K562 (cell line): ENCODE measurements at regions of chr3 and their contacts with region 1.

Region 1: DNA sequence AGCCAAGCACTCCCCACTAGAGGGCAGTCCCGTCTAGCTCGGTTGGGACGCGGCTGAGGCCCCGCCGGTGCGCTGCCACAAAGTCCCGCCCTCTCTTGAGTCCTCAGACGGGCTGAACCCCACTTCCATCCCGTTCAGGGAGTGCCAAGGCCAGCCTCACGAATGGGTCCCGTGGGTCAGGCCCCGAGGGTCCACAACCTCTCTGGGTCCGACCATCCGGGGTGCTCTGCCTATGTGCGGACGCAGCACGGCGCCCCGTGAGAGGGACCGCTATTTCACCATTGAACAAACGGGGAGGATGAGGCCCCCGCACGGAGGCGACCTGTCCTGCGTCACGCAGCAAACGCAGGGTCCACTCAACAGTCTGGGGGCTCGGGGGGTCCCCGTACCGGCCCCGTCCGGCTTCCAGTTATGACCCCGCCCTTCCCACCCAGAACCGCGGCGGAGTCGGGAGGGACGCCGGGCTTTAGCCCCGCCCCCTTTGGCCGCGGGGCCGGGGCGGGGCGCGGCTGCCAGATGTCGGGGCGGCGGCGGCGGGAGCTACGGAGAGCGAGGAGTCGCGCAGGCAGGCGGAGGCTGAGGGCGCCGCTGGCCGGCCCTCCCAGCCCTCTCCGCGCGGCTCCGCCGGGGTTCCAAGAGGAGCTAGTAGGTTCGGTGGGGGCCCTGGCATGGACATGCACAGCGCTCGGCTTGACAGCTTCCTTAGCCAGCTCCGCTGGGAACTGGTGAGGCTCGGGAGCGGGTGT is at the start of gene INKA1:
- DNase-seq: peak; percentile 87 to 91 (median 88)
- ATAC-seq: peak; percentile 85
- H3K4me3 ChIP-seq: peak within 1 kb of the TSS; percentile 82
- H3K27ac ChIP-seq: peak within 1 kb of the TSS; percentile 81
- H3K4me1 ChIP-seq: peaks cover 43 to 62% of the 10 kb centered on the region in 2 experiments
- H3K27me3 ChIP-seq: no peaks in the 10 kb centered on the region
- CTCF ChIP-seq: peak; percentile 79 to 87 (median 84)
- EP300 ChIP-seq: no peak
- POLR2A ChIP-seq: no peak; the same call in none of the 2 replicates
- RAD21 ChIP-seq: peak; percentile 85 to 90
- polyA plus RNA-seq, gene INKA1: 0.55 to 1.2 TPM

Region 2: GRCh38 chr3:49428697-49429100 is 374.2 kb before region 1 on chr3:
- CTCF ChIA-PET with region 1: no interaction called
- POLR2A ChIA-PET with region 1: no interaction called
- in situ Hi-C with region 1: no loop called
- intact Hi-C with region 1: no loop called
- DNase-seq: no peak
- ATAC-seq: no peak
- H3K4me3 ChIP-seq: peak overlapping the region; percentile 58
- H3K27ac ChIP-seq: peak overlapping the region; percentile 88
- H3K4me1 ChIP-seq: peaks cover 0 to 21% of the 10 kb centered on the region in 2 experiments; a peak in 3 of 5 replicates
- H3K27me3 ChIP-seq: no peaks in the 10 kb centered on the region
- CTCF ChIP-seq: no peak
- EP300 ChIP-seq: no peak
- POLR2A ChIP-seq: no peak
- RAD21 ChIP-seq: no peak

Region 3: GRCh38 chr3:49786241-49786958 is 16.5 kb before region 1 on chr3 and contains the start of gene IP6K1:
- CTCF ChIA-PET with region 1: no interaction called
- POLR2A ChIA-PET with region 1: interaction called, 16 read pairs
- in situ Hi-C with region 1: no loop called
- intact Hi-C with region 1: no loop called
- DNase-seq: peak; percentile 97 to 99 (median 98)
- ATAC-seq: peak; percentile 98
- H3K4me3 ChIP-seq: peak within 1 kb of the TSS; percentile 84
- H3K27ac ChIP-seq: peak within 1 kb of the TSS; percentile 91
- H3K4me1 ChIP-seq: peaks cover 12 to 23% of the 10 kb centered on the region in 2 experiments; a peak in 4 of 5 replicates
- H3K27me3 ChIP-seq: no peaks in the 10 kb centered on the region
- CTCF ChIP-seq: no peak
- EP300 ChIP-seq: no peak
- POLR2A ChIP-seq: peak; percentile 87
- RAD21 ChIP-seq: no peak
- polyA plus RNA-seq, gene IP6K1: 0.46 to 1.9 TPM

Region 4: GRCh38 chr3:49813497-49814174 is 10.7 kb after region 1 on chr3 and contains the start of gene UBA7:
- CTCF ChIA-PET with region 1: no interaction called
- POLR2A ChIA-PET with region 1: interaction called, 10 read pairs
- in situ Hi-C with region 1: no loop called
- intact Hi-C with region 1: no loop called
- DNase-seq: peak in 2 of 4 experiments; percentile 17
- ATAC-seq: peak; percentile 77
- H3K4me3 ChIP-seq: no peak within 1 kb of the TSS
- H3K27ac ChIP-seq: no peak within 1 kb of the TSS
- H3K4me1 ChIP-seq: peaks cover 0 to 15% of the 10 kb centered on the region in 2 experiments; a peak in 3 of 5 replicates
- H3K27me3 ChIP-seq: no peaks in the 10 kb centered on the region
- CTCF ChIP-seq: no peak
- EP300 ChIP-seq: no peak
- POLR2A ChIP-seq: no peak
- RAD21 ChIP-seq: no peak
- polyA plus RNA-seq, gene UBA7: 0.17 to 0.80 TPM

Region 5: GRCh38 chr3:49839193-49839809 is 36.4 kb after region 1 on chr3:
- CTCF ChIA-PET with region 1: interaction called, 9 read pairs
- POLR2A ChIA-PET with region 1: interaction called, 4 read pairs
- in situ Hi-C with region 1: no loop called
- intact Hi-C with region 1: loop called (anchors 1 kb)
- DNase-seq: peak; percentile 49 to 78 (median 58)
- ATAC-seq: peak; percentile 94
- H3K4me3 ChIP-seq: no peak overlapping the region
- H3K27ac ChIP-seq: no peak overlapping the region
- H3K4me1 ChIP-seq: no peaks in the 10 kb centered on the region; a peak in 1 of 5 replicates
- H3K27me3 ChIP-seq: no peaks in the 10 kb centered on the region
- CTCF ChIP-seq: peak; percentile 77 to 90 (median 82)
- EP300 ChIP-seq: no peak
- POLR2A ChIP-seq: no peak
- RAD21 ChIP-seq: peak; percentile 86 to 88

Region 6: DNA sequence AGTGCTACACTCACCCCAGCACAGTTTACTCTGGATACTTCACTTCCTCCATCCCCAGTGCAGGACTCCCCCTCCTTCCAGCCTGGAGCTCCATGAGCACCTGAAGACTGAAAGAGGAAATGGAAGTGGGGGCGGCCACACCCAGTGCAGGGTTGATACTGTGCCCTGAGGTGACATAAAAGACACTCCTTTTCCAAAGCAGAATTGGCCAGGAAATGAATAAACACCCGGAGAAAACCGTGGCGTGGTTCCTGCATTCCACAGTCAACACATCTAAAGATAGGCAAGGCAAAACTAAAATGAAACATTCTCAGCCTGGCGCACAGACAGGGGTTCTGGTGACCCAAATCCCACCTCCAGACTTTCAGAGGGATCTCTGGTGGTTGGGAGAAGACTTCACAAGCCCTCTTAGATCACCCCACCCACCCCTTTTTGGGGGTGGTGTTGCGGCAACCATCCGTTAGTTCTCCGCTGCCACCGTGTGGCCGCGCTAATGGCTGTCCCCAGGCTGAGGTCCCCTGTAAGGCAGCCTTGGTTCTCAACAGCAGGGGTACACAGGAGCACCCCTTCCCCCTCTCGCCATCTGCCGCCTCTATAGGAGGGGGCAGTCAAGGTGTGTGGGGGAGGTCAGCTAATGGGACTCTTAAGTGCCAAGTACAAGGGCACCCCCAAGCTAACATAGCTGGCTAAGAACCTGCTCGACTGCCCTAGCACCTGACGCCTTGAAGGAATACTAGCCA is 103.3 kb after region 1 on chr3:
- CTCF ChIA-PET with region 1: no interaction called
- POLR2A ChIA-PET with region 1: interaction called, 4 read pairs
- in situ Hi-C with region 1: no loop called
- intact Hi-C with region 1: loop called (anchors 2 kb)
- DNase-seq: peak; percentile 76 to 86 (median 80)
- ATAC-seq: peak; percentile 75
- H3K4me3 ChIP-seq: peak overlapping the region; percentile 31
- H3K27ac ChIP-seq: peak overlapping the region; percentile 82
- H3K4me1 ChIP-seq: peaks cover 37 to 73% of the 10 kb centered on the region in 2 experiments
- H3K27me3 ChIP-seq: no peaks in the 10 kb centered on the region
- CTCF ChIP-seq: peak; percentile 73 to 81 (median 80)
- EP300 ChIP-seq: no peak
- POLR2A ChIP-seq: no peak
- RAD21 ChIP-seq: peak; percentile 57 to 74

Region 7: DNA sequence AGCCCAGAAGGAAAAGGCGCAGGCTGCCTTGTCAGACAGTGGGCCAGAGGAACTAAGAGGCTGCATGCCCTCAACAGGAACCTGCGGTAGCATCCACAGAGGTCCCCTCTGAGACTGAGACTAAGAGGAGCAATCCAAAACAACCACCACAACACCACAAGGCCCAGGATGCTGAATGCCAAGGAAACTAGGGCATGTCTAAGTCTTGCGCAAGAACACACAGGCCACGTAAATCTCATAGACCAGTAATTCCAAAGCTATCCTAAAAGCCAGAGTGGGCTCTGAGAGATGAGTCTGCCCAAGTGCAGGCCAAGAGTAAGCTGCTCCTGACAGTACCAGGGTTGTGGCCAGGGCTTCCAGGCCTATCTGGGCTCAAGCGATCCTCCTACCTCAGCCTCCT is 113.8 kb after region 1 on chr3:
- CTCF ChIA-PET with region 1: no interaction called
- POLR2A ChIA-PET with region 1: no interaction called
- in situ Hi-C with region 1: no loop called
- intact Hi-C with region 1: no loop called
- DNase-seq: no peak
- ATAC-seq: no peak
- H3K4me3 ChIP-seq: no peak overlapping the region
- H3K27ac ChIP-seq: no peak overlapping the region
- H3K4me1 ChIP-seq: peaks cover 2 to 5% of the 10 kb centered on the region in 2 experiments; a peak in 4 of 5 replicates
- H3K27me3 ChIP-seq: no peaks in the 10 kb centered on the region
- CTCF ChIP-seq: no peak
- EP300 ChIP-seq: no peak
- POLR2A ChIP-seq: no peak
- RAD21 ChIP-seq: no peak

Region 8: GRCh38 chr3:50126287-50127211 is 323.7 kb after region 1 on chr3:
- CTCF ChIA-PET with region 1: no interaction called
- POLR2A ChIA-PET with region 1: no interaction called
- in situ Hi-C with region 1: no loop called
- intact Hi-C with region 1: no loop called
- DNase-seq: peak in 2 of 4 experiments; percentile 30 to 35
- ATAC-seq: no peak
- H3K4me3 ChIP-seq: no peak overlapping the region
- H3K27ac ChIP-seq: no peak overlapping the region
- H3K4me1 ChIP-seq: peaks cover 0 to 17% of the 10 kb centered on the region in 2 experiments; a peak in 2 of 5 replicates
- H3K27me3 ChIP-seq: peaks cover 0 to 7% of the 10 kb centered on the region in 2 experiments; a peak in 2 of 5 replicates
- CTCF ChIP-seq: no peak
- EP300 ChIP-seq: no peak
- POLR2A ChIP-seq: no peak
- RAD21 ChIP-seq: no peak